CD4-positive, alpha-beta T cell (primary cell): ENCODE measurements at regions of chr4 and their contacts with region 1.

Region 1: GRCh38 chr4:80202190-80202711 is 4.9 kb downstream of the PRDM8 start:
- DNase-seq: peak; percentile 59 to 90 (median 76)
- ATAC-seq: peak; percentile 64
- H3K4me3 ChIP-seq: peak overlapping the region; percentile 79
- H3K4me3 Mint-ChIP-seq: peak overlapping the region; percentile 89
- H3K27ac ChIP-seq: peak overlapping the region; percentile 53 to 61
- H3K27ac Mint-ChIP-seq: peak overlapping the region; percentile 71
- H3K4me1 ChIP-seq: peaks cover 22% of the 10 kb centered on the region
- H3K4me1 Mint-ChIP-seq: peaks cover 27% of the 10 kb centered on the region
- H3K27me3 ChIP-seq: peaks cover 6 to 7% of the 10 kb centered on the region in 2 experiments
- H3K27me3 Mint-ChIP-seq: peaks cover 11% of the 10 kb centered on the region
- CTCF ChIP-seq: peak; percentile 73

Region 2: GRCh38 chr4:78938868-78939666 is 1263.2 kb before region 1 on chr4 and contains the start of gene PAQR3:
- CTCF ChIA-PET with region 1: no interaction called
- POLR2A ChIA-PET with region 1: interaction called, 8 read pairs
- intact Hi-C with region 1: loop called in 1 of 2 experiments (anchors 5 kb)
- DNase-seq: peak; percentile 73 to 94 (median 82)
- ATAC-seq: peak; percentile 96
- H3K4me3 ChIP-seq: peak within 1 kb of the TSS; percentile 87
- H3K4me3 Mint-ChIP-seq: peak within 1 kb of the TSS; percentile 93
- H3K27ac ChIP-seq: no peak within 1 kb of the TSS
- H3K27ac Mint-ChIP-seq: peak within 1 kb of the TSS; percentile 82
- H3K4me1 ChIP-seq: peaks cover 24% of the 10 kb centered on the region
- H3K4me1 Mint-ChIP-seq: peaks cover 44% of the 10 kb centered on the region
- H3K27me3 ChIP-seq: no peaks in the 10 kb centered on the region
- H3K27me3 Mint-ChIP-seq: peaks cover 13% of the 10 kb centered on the region
- CTCF ChIP-seq: no peak
- total RNA-seq, gene PAQR3: 29.5 to 30.7 TPM

Region 3: GRCh38 chr4:80072744-80073472 is 129.3 kb before region 1 on chr4 and contains the start of gene ANTXR2:
- CTCF ChIA-PET with region 1: interaction called, 10 read pairs
- POLR2A ChIA-PET with region 1: interaction called, 33 read pairs
- intact Hi-C with region 1: loop called in 1 of 2 experiments (anchors 5 kb)
- DNase-seq: peak; percentile 37 to 88 (median 67)
- ATAC-seq: peak; percentile 80
- H3K4me3 ChIP-seq: peak within 1 kb of the TSS; percentile 90
- H3K4me3 Mint-ChIP-seq: peak within 1 kb of the TSS; percentile 99
- H3K27ac ChIP-seq: peak within 1 kb of the TSS; percentile 78 to 82
- H3K27ac Mint-ChIP-seq: peak within 1 kb of the TSS; percentile 95
- H3K4me1 ChIP-seq: peaks cover 22% of the 10 kb centered on the region
- H3K4me1 Mint-ChIP-seq: peaks cover 79% of the 10 kb centered on the region
- H3K27me3 ChIP-seq: no peaks in the 10 kb centered on the region
- H3K27me3 Mint-ChIP-seq: no peaks in the 10 kb centered on the region
- CTCF ChIP-seq: no peak
- total RNA-seq, gene ANTXR2: 15.3 to 16.7 TPM

Region 4: GRCh38 chr4:80173401-80173800 is 28.9 kb before region 1 on chr4:
- CTCF ChIA-PET with region 1: interaction called, 16 read pairs
- POLR2A ChIA-PET with region 1: interaction called, 20 read pairs
- intact Hi-C with region 1: no loop called
- DNase-seq: peak in 12 of 14 experiments; percentile 23 to 89 (median 52)
- ATAC-seq: peak; percentile 96
- H3K4me3 ChIP-seq: no peak overlapping the region
- H3K4me3 Mint-ChIP-seq: peak overlapping the region; percentile 71
- H3K27ac ChIP-seq: peak overlapping the region; percentile 62 to 89
- H3K27ac Mint-ChIP-seq: peak overlapping the region; percentile 96
- H3K4me1 ChIP-seq: peaks cover 54% of the 10 kb centered on the region
- H3K4me1 Mint-ChIP-seq: peaks cover 65% of the 10 kb centered on the region
- H3K27me3 ChIP-seq: no peaks in the 10 kb centered on the region
- H3K27me3 Mint-ChIP-seq: no peaks in the 10 kb centered on the region
- CTCF ChIP-seq: no peak

Region 5: GRCh38 chr4:81052119-81053068 is 850.1 kb after region 1 on chr4:
- CTCF ChIA-PET with region 1: no interaction called
- POLR2A ChIA-PET with region 1: no interaction called
- intact Hi-C with region 1: loop called in 1 of 2 experiments (anchors 10 kb)
- DNase-seq: peak; percentile 11 to 62 (median 32)
- ATAC-seq: peak; percentile 48
- H3K4me3 ChIP-seq: no peak overlapping the region
- H3K4me3 Mint-ChIP-seq: no peak overlapping the region
- H3K27ac ChIP-seq: no peak overlapping the region
- H3K27ac Mint-ChIP-seq: no peak overlapping the region
- H3K4me1 ChIP-seq: no peaks in the 10 kb centered on the region
- H3K4me1 Mint-ChIP-seq: no peaks in the 10 kb centered on the region
- H3K27me3 ChIP-seq: no peaks in the 10 kb centered on the region
- H3K27me3 Mint-ChIP-seq: peaks cover 6% of the 10 kb centered on the region
- CTCF ChIP-seq: peak; percentile 69